CD4-positive, alpha-beta T cell (primary cell): ENCODE measurements at regions of chr2 and their contacts with region 1.

Region 1: DNA sequence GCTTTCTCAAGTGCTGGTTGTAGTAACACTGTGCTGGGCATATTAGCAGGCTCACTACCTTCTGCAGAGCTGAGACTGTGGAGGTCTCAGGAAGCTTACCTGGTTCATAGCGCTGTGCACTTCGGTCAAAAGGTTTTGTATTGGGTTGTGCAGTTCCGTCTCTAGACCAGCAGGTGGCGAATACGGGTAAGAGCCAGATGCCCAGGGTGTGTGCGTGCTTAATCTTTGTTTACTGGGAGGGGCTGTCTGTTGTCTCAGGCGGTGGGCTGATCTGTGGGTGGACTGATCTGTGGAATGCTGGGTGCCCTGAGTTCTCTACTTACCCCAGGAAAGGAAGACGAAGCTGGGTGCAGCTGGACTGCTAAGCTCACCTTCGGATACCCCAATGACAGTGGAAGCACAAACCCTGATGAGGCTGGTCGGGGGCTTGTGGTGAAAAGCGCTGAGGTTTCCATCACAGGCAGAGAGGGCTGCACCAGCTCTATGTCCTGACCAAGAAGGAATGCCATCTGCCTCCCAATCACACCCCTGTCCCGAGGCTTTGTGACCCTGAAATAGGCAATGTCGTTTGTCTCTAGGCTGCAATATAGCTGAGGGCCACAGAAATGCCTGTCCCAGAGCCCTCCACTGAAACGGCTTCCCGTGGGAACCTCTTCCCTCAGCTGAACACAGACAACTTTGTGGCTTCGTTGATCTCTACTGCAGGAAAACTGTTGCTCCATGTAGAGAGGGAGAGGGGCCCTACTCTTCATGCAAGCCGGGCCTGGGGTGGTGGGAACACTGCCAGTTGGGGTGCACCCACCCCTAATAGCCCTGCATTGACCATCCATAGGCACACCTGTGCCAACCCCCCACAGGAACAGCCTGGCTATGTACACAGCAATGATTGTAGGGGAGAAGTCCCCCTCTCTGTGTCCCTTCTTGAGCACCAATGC is 45.9 kb upstream of the FAM117B start:
- DNase-seq: peak; percentile 42 to 87 (median 64)
- ATAC-seq: peak; percentile 99
- H3K4me3 ChIP-seq: no peak overlapping the region
- H3K4me3 Mint-ChIP-seq: no peak overlapping the region
- H3K27ac ChIP-seq: no peak overlapping the region
- H3K27ac Mint-ChIP-seq: no peak overlapping the region
- H3K4me1 ChIP-seq: peaks cover 10% of the 10 kb centered on the region
- H3K4me1 Mint-ChIP-seq: peaks cover 8% of the 10 kb centered on the region
- H3K27me3 ChIP-seq: peaks cover 0 to 2% of the 10 kb centered on the region in 2 experiments
- H3K27me3 Mint-ChIP-seq: no peaks in the 10 kb centered on the region
- CTCF ChIP-seq: peak; percentile 80

Region 2: DNA sequence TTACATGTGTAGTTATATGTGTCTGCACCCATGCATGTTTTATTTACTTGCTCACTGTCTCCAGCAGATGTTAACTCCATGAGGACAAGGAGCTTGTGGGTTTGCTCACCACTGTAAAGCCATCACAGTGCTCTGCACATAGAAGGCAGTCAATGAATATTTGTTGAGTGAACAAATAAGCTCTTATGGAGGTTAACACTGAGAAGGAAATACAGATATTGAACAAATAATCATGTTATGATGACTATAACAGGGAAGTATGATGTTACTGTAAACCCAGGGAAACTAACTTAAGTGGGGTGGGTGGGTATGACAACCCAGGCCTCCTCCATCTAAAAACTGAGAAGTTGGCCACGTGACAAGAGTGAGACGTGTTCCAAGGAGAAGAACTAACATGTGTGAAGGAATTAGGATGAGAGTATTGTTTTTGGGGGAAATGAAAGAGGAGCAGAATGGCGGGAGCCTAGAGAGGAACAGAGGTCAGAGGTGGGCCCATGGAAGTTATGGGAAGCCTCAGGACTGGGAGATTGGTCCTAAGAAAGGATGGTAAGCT is 39.8 kb after region 1 on chr2:
- CTCF ChIA-PET with region 1: no interaction called
- POLR2A ChIA-PET with region 1: interaction called, 13 read pairs
- intact Hi-C with region 1: loop called in 1 of 2 experiments (anchors 2 kb)
- DNase-seq: no peak
- ATAC-seq: no peak
- H3K4me3 ChIP-seq: no peak overlapping the region
- H3K4me3 Mint-ChIP-seq: no peak overlapping the region
- H3K27ac ChIP-seq: no peak overlapping the region
- H3K27ac Mint-ChIP-seq: no peak overlapping the region
- H3K4me1 ChIP-seq: peaks cover 17% of the 10 kb centered on the region
- H3K4me1 Mint-ChIP-seq: peaks cover 11% of the 10 kb centered on the region
- H3K27me3 ChIP-seq: no peaks in the 10 kb centered on the region
- H3K27me3 Mint-ChIP-seq: no peaks in the 10 kb centered on the region
- CTCF ChIP-seq: no peak

Region 3: DNA sequence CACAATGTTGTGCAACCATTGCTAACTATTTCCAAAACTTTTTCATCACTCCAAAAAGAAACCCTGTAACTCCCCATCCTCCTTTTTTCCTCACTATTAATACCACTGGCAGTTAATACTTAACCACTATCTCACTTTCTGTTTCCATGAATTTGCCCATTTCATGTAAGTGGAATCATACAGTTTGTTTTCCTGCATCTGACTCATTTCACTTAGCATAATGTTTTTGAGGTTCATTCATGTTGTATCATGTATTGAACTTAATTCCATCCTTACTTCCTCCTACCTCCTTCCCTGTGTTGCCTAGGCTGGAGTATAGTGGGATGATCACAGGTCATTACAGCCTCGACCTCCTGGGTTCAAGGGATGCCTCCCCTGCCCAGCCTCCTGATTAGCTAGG is 114.2 kb after region 1 on chr2:
- CTCF ChIA-PET with region 1: interaction called, 7 read pairs
- POLR2A ChIA-PET with region 1: no interaction called
- intact Hi-C with region 1: loop called in 1 of 2 experiments (anchors 2 kb)
- DNase-seq: no peak
- ATAC-seq: no peak
- H3K4me3 ChIP-seq: no peak overlapping the region
- H3K4me3 Mint-ChIP-seq: no peak overlapping the region
- H3K27ac ChIP-seq: no peak overlapping the region
- H3K27ac Mint-ChIP-seq: peak overlapping the region; percentile 1
- H3K4me1 ChIP-seq: peaks cover 7% of the 10 kb centered on the region
- H3K4me1 Mint-ChIP-seq: peaks cover 66% of the 10 kb centered on the region
- H3K27me3 ChIP-seq: no peaks in the 10 kb centered on the region
- H3K27me3 Mint-ChIP-seq: no peaks in the 10 kb centered on the region
- CTCF ChIP-seq: no peak

Region 4: DNA sequence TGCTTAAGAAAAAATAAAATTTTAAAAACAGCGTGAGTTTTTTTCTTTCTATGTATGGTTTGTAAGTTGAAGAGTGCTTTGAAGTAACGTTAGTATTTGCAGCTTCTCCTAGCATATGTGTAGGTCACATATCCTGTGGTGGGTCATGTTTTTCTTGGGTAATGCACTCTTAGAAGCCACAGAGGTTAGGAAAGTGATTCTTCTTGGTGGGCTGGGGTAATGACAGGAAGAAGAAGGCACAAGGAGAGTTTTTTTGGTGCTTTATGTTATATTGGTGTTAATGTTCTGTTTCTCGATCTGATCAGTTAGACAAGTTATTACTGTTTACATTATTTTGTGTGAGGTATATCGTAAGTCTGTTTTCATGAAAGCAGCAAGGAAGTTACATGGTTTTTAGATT is 173.6 kb after region 1 on chr2:
- CTCF ChIA-PET with region 1: interaction called, 3 read pairs
- POLR2A ChIA-PET with region 1: interaction called, 4 read pairs
- intact Hi-C with region 1: loop called (anchors 2 to 5 kb)
- DNase-seq: peak in 3 of 14 experiments; percentile 39 to 45 (median 40)
- ATAC-seq: peak; percentile 90
- H3K4me3 ChIP-seq: no peak overlapping the region
- H3K4me3 Mint-ChIP-seq: peak overlapping the region; percentile 52
- H3K27ac ChIP-seq: no peak overlapping the region
- H3K27ac Mint-ChIP-seq: peak overlapping the region; percentile 84
- H3K4me1 ChIP-seq: peaks cover 4% of the 10 kb centered on the region
- H3K4me1 Mint-ChIP-seq: peaks cover 59% of the 10 kb centered on the region
- H3K27me3 ChIP-seq: no peaks in the 10 kb centered on the region
- H3K27me3 Mint-ChIP-seq: no peaks in the 10 kb centered on the region
- CTCF ChIP-seq: no peak

Region 5: GRCh38 chr2:202870431-202871299 is 281.8 kb after region 1 on chr2:
- CTCF ChIA-PET with region 1: interaction called, 9 read pairs
- POLR2A ChIA-PET with region 1: interaction called, 20 read pairs
- intact Hi-C with region 1: loop called (anchors 1 kb)
- DNase-seq: peak; percentile 39 to 75 (median 56)
- ATAC-seq: peak; percentile 81
- H3K4me3 ChIP-seq: peak overlapping the region; percentile 84
- H3K4me3 Mint-ChIP-seq: peak overlapping the region; percentile 95
- H3K27ac ChIP-seq: no peak overlapping the region
- H3K27ac Mint-ChIP-seq: peak overlapping the region; percentile 26
- H3K4me1 ChIP-seq: peaks cover 6% of the 10 kb centered on the region
- H3K4me1 Mint-ChIP-seq: peaks cover 13% of the 10 kb centered on the region
- H3K27me3 ChIP-seq: no peaks in the 10 kb centered on the region
- H3K27me3 Mint-ChIP-seq: no peaks in the 10 kb centered on the region
- CTCF ChIP-seq: peak; percentile 67

Region 6: DNA sequence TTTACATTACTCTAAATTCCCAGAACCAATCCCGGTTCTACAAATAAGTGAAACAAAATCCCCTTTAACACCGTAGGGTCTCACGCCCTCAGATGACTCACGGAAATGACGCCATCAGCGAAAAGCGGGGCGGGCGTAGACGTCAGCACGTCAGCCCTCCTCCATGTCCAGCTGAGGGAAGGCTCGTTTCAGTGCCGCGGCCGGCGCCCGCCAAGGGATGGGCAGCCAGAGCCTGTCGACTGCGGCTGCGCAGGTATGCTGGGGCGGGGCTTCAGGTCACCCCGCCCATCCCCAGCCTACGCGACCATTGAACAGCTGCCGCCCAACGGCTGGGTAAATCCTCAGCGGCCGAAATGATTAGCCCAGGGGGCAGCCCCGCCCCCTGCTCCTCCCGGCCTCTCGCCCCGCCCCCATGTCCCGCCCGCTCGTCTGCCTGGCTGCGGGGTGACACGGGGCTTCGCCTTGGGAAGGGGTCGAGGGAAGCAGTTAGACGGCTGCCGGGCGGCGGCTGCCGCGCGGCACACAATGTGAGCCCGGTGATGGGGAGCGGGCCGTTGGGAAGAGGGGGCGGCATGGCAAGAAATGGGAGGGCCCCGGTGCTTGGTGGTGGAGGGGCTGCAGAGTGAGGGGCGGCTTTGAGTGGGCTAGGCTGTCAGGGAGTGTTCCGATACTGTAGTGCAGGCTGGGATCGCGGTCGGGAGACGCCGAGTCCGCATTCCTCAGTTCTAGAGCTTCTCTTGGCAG is 425.7 kb after region 1 on chr2 and contains the start of gene NBEAL1:
- CTCF ChIA-PET with region 1: no interaction called
- POLR2A ChIA-PET with region 1: no interaction called
- intact Hi-C with region 1: no loop called
- DNase-seq: peak; percentile 86 to 99 (median 94)
- ATAC-seq: peak; percentile 87
- H3K4me3 ChIP-seq: peak within 1 kb of the TSS; percentile 88
- H3K4me3 Mint-ChIP-seq: peak within 1 kb of the TSS; percentile 93
- H3K27ac ChIP-seq: peak within 1 kb of the TSS; percentile 64 to 86
- H3K27ac Mint-ChIP-seq: peak within 1 kb of the TSS; percentile 93
- H3K4me1 ChIP-seq: peaks cover 15% of the 10 kb centered on the region
- H3K4me1 Mint-ChIP-seq: peaks cover 50% of the 10 kb centered on the region
- H3K27me3 ChIP-seq: no peaks in the 10 kb centered on the region
- H3K27me3 Mint-ChIP-seq: no peaks in the 10 kb centered on the region
- CTCF ChIP-seq: no peak
- total RNA-seq, gene NBEAL1: 8.3 to 11.2 TPM